ENCODE measurements at regions of chr15 and their contacts with region 1.

Region 1: GRCh38 chr15:48285329-48286214 is 45.7 kb upstream of the DUT start:
- DNase-seq: peak; percentile 68
- ATAC-seq: peak; percentile 63
- H3K4me3 ChIP-seq: no peak overlapping the region
- H3K4me3 Mint-ChIP-seq: peak overlapping the region; percentile 37
- H3K27ac ChIP-seq: no peak overlapping the region
- H3K27ac Mint-ChIP-seq: no peak overlapping the region
- H3K4me1 ChIP-seq: peaks cover 3% of the 10 kb centered on the region in 2 donors
- H3K4me1 Mint-ChIP-seq: peaks cover 6% of the 10 kb centered on the region
- H3K27me3 ChIP-seq: no peaks in the 10 kb centered on the region
- H3K27me3 Mint-ChIP-seq: no peaks in the 10 kb centered on the region
- CTCF ChIP-seq: peak; percentile 87

Region 2: GRCh38 chr15:47196057-47196456 is 1089.5 kb before region 1 on chr15:
- CTCF ChIA-PET with region 1: interaction called, 38 read pairs
- POLR2A ChIA-PET with region 1: no interaction called
- intact Hi-C with region 1: no loop called
- DNase-seq: peak; percentile 50
- ATAC-seq: no peak
- H3K4me3 ChIP-seq: no peak overlapping the region
- H3K4me3 Mint-ChIP-seq: no peak overlapping the region
- H3K27ac ChIP-seq: no peak overlapping the region
- H3K27ac Mint-ChIP-seq: no peak overlapping the region
- H3K4me1 ChIP-seq: no peaks in the 10 kb centered on the region
- H3K4me1 Mint-ChIP-seq: no peaks in the 10 kb centered on the region
- H3K27me3 ChIP-seq: no peaks in the 10 kb centered on the region
- H3K27me3 Mint-ChIP-seq: no peaks in the 10 kb centered on the region
- CTCF ChIP-seq: peak; percentile 58

Region 3: DNA sequence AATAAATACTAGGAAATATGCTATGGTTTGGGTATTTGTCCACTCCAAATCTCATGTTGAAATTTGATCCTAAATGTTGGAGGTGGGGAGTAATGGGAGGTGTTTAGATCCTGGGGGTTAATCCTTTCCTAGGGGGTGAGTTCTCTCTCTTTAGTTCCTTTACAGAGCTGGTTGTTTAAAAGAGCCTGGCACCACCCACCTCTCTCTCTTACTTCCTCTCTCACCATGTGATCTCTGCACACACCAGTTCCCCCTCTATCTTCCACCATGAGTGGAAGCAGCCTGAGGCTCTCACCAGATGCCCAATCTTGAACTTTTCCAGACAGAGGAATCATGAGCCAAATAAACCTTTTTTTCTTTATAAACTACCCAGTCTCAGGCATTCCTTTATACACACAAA is 154.2 kb before region 1 on chr15:
- CTCF ChIA-PET with region 1: no interaction called
- POLR2A ChIA-PET with region 1: no interaction called
- intact Hi-C with region 1: no loop called
- DNase-seq: no peak
- ATAC-seq: no peak
- H3K4me3 ChIP-seq: no peak overlapping the region
- H3K4me3 Mint-ChIP-seq: no peak overlapping the region
- H3K27ac ChIP-seq: no peak overlapping the region
- H3K27ac Mint-ChIP-seq: no peak overlapping the region
- H3K4me1 ChIP-seq: no peaks in the 10 kb centered on the region
- H3K4me1 Mint-ChIP-seq: no peaks in the 10 kb centered on the region
- H3K27me3 ChIP-seq: no peaks in the 10 kb centered on the region
- H3K27me3 Mint-ChIP-seq: no peaks in the 10 kb centered on the region
- CTCF ChIP-seq: no peak

Region 4: DNA sequence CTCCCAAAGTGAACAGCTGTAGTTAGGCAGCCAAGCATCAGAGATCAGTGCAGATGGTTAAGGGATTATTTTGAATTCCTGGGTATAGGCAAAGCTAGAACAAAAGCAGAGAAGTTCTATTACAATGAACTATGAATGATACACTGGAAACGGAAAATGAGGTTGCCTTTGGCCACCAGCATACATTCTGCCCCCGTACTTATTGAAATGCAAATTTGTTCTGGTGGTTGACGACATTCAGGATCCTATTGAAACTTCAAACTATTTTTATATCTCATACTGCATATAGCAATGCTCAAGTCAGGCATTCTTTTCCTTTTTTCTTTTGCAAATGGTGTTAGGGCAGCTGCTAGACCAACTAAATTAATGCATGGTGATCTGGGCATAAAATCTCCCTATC is 17.8 kb before region 1 on chr15:
- CTCF ChIA-PET with region 1: interaction called, 18 read pairs
- POLR2A ChIA-PET with region 1: no interaction called
- intact Hi-C with region 1: no loop called
- DNase-seq: no peak
- ATAC-seq: no peak
- H3K4me3 ChIP-seq: no peak overlapping the region
- H3K4me3 Mint-ChIP-seq: no peak overlapping the region
- H3K27ac ChIP-seq: no peak overlapping the region
- H3K27ac Mint-ChIP-seq: no peak overlapping the region
- H3K4me1 ChIP-seq: no peaks in the 10 kb centered on the region
- H3K4me1 Mint-ChIP-seq: no peaks in the 10 kb centered on the region
- H3K27me3 ChIP-seq: no peaks in the 10 kb centered on the region
- H3K27me3 Mint-ChIP-seq: peaks cover 8% of the 10 kb centered on the region
- CTCF ChIP-seq: no peak

Region 5: GRCh38 chr15:48324914-48325313 is 39.3 kb after region 1 on chr15:
- CTCF ChIA-PET with region 1: no interaction called
- POLR2A ChIA-PET with region 1: no interaction called
- intact Hi-C with region 1: no loop called
- DNase-seq: no peak
- ATAC-seq: no peak
- H3K4me3 ChIP-seq: no peak overlapping the region
- H3K4me3 Mint-ChIP-seq: no peak overlapping the region
- H3K27ac ChIP-seq: no peak overlapping the region
- H3K27ac Mint-ChIP-seq: no peak overlapping the region
- H3K4me1 ChIP-seq: peaks cover 10 to 11% of the 10 kb centered on the region in 2 donors
- H3K4me1 Mint-ChIP-seq: peaks cover 14% of the 10 kb centered on the region
- H3K27me3 ChIP-seq: no peaks in the 10 kb centered on the region
- H3K27me3 Mint-ChIP-seq: no peaks in the 10 kb centered on the region
- CTCF ChIP-seq: no peak